ENCODE measurements at regions of chr19 and their contacts with region 1.

Region 1: GRCh38 chr19:18967358-18968146 is 26.5 kb upstream of the HOMER3 start:
- DNase-seq: peak; percentile 91
- H3K4me3 Mint-ChIP-seq: no peak overlapping the region
- H3K27ac Mint-ChIP-seq: peak overlapping the region; percentile 27
- H3K4me1 Mint-ChIP-seq: no peaks in the 10 kb centered on the region
- H3K27me3 Mint-ChIP-seq: no peaks in the 10 kb centered on the region
- CTCF ChIP-seq: no peak

Region 2: DNA sequence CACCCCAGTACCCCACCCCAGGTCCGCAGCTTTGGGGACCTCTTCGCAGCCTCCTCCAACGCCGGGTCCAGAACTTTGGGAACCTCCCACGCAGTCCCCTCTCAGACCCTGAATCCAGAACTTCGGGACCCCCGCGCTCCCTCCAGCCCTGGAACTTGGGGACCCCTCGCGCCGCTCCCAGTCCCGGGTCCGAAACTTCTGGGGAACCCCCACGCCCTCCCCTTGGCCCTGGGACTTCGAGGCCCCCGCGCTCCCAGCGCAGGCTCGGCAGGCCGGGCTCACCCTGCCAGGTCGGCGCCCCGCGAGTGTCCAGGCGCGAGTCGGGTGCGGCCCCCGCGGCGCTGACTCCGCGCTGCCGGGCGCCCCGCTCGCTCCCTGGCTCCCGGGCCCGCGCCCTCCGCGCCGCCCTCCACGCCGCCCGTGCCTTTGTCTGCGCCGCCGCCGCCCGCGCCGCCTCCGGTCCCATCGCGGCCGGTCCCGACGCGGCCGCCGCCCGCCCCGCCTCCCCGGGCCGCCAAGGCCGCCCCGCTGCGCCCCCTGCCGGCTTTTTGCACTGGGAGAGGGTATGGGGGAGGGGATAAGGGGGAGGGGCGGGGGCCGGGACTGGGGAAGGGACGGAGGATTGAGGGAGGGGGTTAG is 26.7 kb before region 1 on chr19 and contains the start of gene HOMER3:
- CTCF ChIA-PET with region 1: interaction called, 3 read pairs
- POLR2A ChIA-PET with region 1: interaction called, 10 read pairs
- intact Hi-C with region 1: no loop called
- DNase-seq: peak; percentile 74
- H3K4me3 Mint-ChIP-seq: peak within 1 kb of the TSS; percentile 94
- H3K27ac Mint-ChIP-seq: peak within 1 kb of the TSS; percentile 93
- H3K4me1 Mint-ChIP-seq: peaks cover 17% of the 10 kb centered on the region
- H3K27me3 Mint-ChIP-seq: no peaks in the 10 kb centered on the region
- CTCF ChIP-seq: peak; percentile 20
- total RNA-seq, gene HOMER3: 57.9 and 58.9 TPM in 2 replicates

Region 3: GRCh38 chr19:18951665-18952281 is 15.8 kb before region 1 on chr19:
- CTCF ChIA-PET with region 1: no interaction called
- POLR2A ChIA-PET with region 1: interaction called, 4 read pairs
- intact Hi-C with region 1: loop called (anchors 2 kb)
- DNase-seq: peak; percentile 75
- H3K4me3 Mint-ChIP-seq: no peak overlapping the region
- H3K27ac Mint-ChIP-seq: no peak overlapping the region
- H3K4me1 Mint-ChIP-seq: peaks cover 18% of the 10 kb centered on the region
- H3K27me3 Mint-ChIP-seq: no peaks in the 10 kb centered on the region
- CTCF ChIP-seq: no peak